Endothelial cell of umbilical vein (primary cell): ENCODE measurements at regions of chr1 and their contacts with region 1.

Region 1: GRCh38 chr1:44002606-44003157 is 11.3 kb downstream of the CCDC24 start:
- DNase-seq: no peak
- H3K4me3 ChIP-seq: no peak overlapping the region
- H3K27ac ChIP-seq: no peak overlapping the region
- H3K4me1 ChIP-seq: no peaks in the 10 kb centered on the region
- H3K27me3 ChIP-seq: no peaks in the 10 kb centered on the region
- CTCF ChIP-seq: peak in 1 of 2 donors; percentile 26
- POLR2A ChIP-seq: no peak

Region 2: GRCh38 chr1:43587594-43587993 is 415.1 kb before region 1 on chr1:
- CTCF ChIA-PET with region 1: no interaction called
- POLR2A ChIA-PET with region 1: no interaction called
- dilution Hi-C with region 1: no loop called
- intact Hi-C with region 1: no loop called
- DNase-seq: no peak
- H3K4me3 ChIP-seq: no peak overlapping the region
- H3K27ac ChIP-seq: no peak overlapping the region
- H3K4me1 ChIP-seq: no peaks in the 10 kb centered on the region
- H3K27me3 ChIP-seq: no peaks in the 10 kb centered on the region
- CTCF ChIP-seq: no peak
- POLR2A ChIP-seq: no peak

Region 3: DNA sequence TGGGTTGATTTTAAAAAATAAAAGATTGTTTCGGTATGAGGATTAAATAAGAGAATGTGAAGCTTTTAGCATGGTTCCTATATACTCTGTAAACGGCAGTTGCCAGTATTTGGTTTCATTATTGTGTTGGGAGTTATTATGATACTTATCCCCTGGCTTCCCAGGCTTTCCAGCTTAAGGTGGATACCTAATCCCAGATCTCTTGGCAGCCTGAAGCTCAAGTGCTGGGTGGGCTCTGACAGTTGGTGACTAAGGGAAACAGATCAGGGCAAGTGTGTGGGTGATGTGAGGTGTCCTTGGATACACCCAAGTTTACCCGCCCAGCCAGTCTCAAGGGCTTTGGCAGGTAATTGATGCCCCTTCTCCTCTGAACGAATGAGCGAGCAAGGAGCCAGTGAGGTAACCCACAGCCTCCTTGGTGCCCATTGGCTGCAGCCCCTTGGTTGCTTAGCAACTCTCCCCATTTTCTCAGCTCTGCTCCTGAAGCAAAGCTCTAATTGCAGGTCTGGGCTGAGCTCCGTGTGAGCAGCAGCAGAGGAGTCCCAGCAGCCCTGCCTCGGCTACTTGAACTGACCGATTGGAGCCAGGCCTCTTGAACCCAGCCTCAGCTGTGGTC is 49.8 kb before region 1 on chr1:
- CTCF ChIA-PET with region 1: no interaction called
- POLR2A ChIA-PET with region 1: no interaction called
- dilution Hi-C with region 1: no loop called
- intact Hi-C with region 1: no loop called
- DNase-seq: no peak
- H3K4me3 ChIP-seq: no peak overlapping the region
- H3K27ac ChIP-seq: no peak overlapping the region
- H3K4me1 ChIP-seq: peaks cover 7% of the 10 kb centered on the region
- H3K27me3 ChIP-seq: no peaks in the 10 kb centered on the region
- CTCF ChIP-seq: no peak
- POLR2A ChIP-seq: no peak

Region 4: DNA sequence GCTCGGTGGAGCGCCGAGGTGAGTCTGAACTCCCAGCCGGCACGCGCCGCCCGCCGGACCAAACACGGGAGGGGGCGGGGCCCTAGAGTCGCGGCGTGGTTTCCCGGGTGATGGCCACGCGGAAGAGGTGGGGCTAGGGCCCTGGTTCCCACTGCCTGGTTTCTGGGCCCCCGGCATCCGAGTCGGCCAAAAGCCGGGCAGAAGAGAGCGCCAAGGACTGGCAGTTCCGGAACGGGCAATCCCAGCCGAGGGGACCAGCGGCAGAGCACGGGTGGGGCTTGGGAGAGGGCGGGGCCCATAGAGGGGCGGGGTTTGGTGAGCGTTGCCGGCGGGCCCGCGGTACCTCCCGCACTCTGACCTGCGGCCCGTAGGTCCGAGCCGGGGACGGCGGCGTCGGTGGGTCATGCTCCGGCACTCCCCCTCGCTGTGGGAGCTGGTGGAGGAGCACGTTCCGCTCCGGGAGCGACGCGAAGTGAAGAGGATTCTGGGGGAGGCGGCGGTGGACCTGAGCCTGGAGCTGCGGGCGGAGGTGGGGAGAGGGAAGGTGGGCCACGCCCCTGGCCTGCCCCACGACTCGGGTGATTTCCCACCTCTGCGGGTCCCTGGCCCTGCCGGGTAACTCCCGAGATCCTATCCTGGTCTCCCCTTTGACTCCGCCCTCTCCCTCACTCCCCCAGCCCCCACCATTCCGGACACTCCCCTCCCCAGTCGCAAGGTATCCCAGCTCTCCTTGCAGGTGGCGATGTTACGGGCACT is 11.0 kb before region 1 on chr1 and contains the start of gene CCDC24:
- CTCF ChIA-PET with region 1: interaction called, 14 read pairs
- POLR2A ChIA-PET with region 1: no interaction called
- dilution Hi-C with region 1: no loop called
- intact Hi-C with region 1: no loop called
- DNase-seq: peak; percentile 59
- H3K4me3 ChIP-seq: peak within 1 kb of the TSS; percentile 39 to 55 (median 49)
- H3K27ac ChIP-seq: no peak within 1 kb of the TSS
- H3K4me1 ChIP-seq: peaks cover 7% of the 10 kb centered on the region
- H3K27me3 ChIP-seq: no peaks in the 10 kb centered on the region
- CTCF ChIP-seq: no peak
- POLR2A ChIP-seq: peak; percentile 41
- total RNA-seq, gene CCDC24: 2.2 and 2.8 TPM in 2 replicates

Region 5: GRCh38 chr1:44021581-44022321 is 19.1 kb after region 1 on chr1:
- CTCF ChIA-PET with region 1: interaction called, 16 read pairs
- POLR2A ChIA-PET with region 1: no interaction called
- dilution Hi-C with region 1: no loop called
- intact Hi-C with region 1: no loop called
- DNase-seq: no peak
- H3K4me3 ChIP-seq: no peak overlapping the region
- H3K27ac ChIP-seq: no peak overlapping the region
- H3K4me1 ChIP-seq: no peaks in the 10 kb centered on the region
- H3K27me3 ChIP-seq: no peaks in the 10 kb centered on the region
- CTCF ChIP-seq: no peak
- POLR2A ChIP-seq: no peak

Region 6: DNA sequence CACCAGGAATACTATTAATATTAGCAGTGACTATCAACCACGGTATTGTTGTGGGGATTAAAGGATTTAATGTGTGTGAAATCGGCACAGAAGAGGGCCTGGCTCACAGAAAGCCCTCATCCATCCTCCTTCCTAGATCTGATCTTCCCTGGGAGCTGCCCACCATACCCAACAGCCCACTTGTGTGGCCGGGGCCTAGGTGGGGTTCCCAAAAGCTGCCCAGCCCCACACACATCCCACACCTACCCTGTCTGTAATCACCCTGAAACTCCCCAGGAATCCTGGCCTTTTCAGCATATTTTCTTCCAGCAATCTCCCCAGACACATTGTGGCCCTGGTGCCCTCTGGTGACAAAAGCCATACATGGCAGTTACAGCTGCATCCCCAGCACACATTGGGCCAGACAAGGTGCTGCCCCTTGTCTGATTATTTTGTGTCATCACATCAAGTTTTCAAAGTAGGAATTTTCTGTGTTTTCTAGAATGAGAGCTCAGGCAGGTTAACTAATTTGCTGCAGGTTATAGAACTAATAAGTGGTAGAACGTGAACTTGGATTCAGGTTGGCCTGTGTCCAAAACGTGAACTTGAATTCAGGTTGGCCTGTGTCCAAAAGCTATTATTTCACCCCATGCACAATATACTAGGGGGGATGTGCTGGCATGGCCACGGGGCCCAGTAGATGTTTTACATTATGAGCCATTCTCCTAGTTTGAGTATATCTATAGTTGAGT is 33.9 kb after region 1 on chr1:
- CTCF ChIA-PET with region 1: interaction called, 101 read pairs
- POLR2A ChIA-PET with region 1: no interaction called
- dilution Hi-C with region 1: no loop called
- intact Hi-C with region 1: loop called (anchors 1 kb)
- DNase-seq: peak; percentile 84
- H3K4me3 ChIP-seq: no peak overlapping the region
- H3K27ac ChIP-seq: no peak overlapping the region
- H3K4me1 ChIP-seq: no peaks in the 10 kb centered on the region
- H3K27me3 ChIP-seq: peaks cover 0 to 5% of the 10 kb centered on the region in 2 experiments
- CTCF ChIP-seq: peak; percentile 70 to 78
- POLR2A ChIP-seq: no peak

Region 7: DNA sequence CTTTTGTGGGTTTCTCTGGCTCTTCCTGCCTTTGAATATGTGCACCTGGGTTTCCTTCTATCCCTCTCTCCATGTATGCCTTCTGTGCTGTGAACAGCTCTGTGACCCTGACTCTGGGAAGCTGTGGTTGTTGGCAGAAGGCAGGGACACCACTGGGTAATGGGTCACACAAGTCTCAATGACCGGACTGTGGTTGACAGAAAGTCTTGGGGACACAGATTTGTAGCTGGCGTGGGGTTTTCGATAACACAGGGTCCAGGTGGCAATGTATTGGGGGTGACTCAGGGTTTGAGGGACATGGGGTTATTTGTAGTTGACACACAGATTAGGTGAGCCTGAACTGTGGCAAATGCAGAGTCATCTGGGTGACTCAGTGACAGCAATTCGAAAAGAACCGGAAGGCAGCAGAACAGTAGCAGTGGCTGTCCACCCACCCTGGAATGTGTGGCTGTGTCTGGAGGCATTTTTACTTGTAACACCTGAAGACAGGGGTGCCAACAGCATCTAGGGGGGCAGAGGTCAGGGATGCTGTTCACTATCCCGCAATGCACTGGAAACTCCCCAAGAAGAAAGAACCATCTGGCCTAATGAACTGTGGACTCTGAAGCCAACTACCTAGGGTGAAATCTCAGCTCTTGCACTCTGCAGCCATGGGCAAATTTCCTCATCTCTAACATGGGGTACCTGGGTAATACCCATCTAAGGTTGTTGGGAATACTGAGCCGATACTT is 41.6 kb after region 1 on chr1:
- CTCF ChIA-PET with region 1: interaction called, 120 read pairs
- POLR2A ChIA-PET with region 1: no interaction called
- dilution Hi-C with region 1: no loop called
- intact Hi-C with region 1: loop called (anchors 1 kb)
- DNase-seq: no peak
- H3K4me3 ChIP-seq: no peak overlapping the region
- H3K27ac ChIP-seq: no peak overlapping the region
- H3K4me1 ChIP-seq: peaks cover 22% of the 10 kb centered on the region
- H3K27me3 ChIP-seq: peaks cover 5% of the 10 kb centered on the region in 2 experiments
- CTCF ChIP-seq: no peak
- POLR2A ChIP-seq: no peak

Region 8: GRCh38 chr1:44361478-44361877 is 358.8 kb after region 1 on chr1:
- CTCF ChIA-PET with region 1: no interaction called
- POLR2A ChIA-PET with region 1: no interaction called
- dilution Hi-C with region 1: no loop called
- intact Hi-C with region 1: no loop called
- DNase-seq: no peak
- H3K4me3 ChIP-seq: no peak overlapping the region
- H3K27ac ChIP-seq: no peak overlapping the region
- H3K4me1 ChIP-seq: no peaks in the 10 kb centered on the region
- H3K27me3 ChIP-seq: peaks cover 6 to 16% of the 10 kb centered on the region in 2 experiments
- CTCF ChIP-seq: no peak
- POLR2A ChIP-seq: no peak